B cell (primary cell): ENCODE measurements at regions of chr2 and their contacts with region 1.

Region 1: GRCh38 chr2:25165992-25166875 is 2.1 kb downstream of the POMC start:
- DNase-seq: peak; percentile 90
- ATAC-seq: peak; percentile 95
- H3K4me3 ChIP-seq: no peak overlapping the region
- H3K4me3 Mint-ChIP-seq: peak overlapping the region; percentile 76
- H3K27ac ChIP-seq: peak overlapping the region; percentile 34 to 46
- H3K27ac Mint-ChIP-seq: no peak overlapping the region
- H3K4me1 ChIP-seq: peaks cover 36 to 40% of the 10 kb centered on the region in 2 donors
- H3K4me1 Mint-ChIP-seq: peaks cover 41% of the 10 kb centered on the region
- H3K27me3 ChIP-seq: peaks cover 0 to 34% (median 21%) of the 10 kb centered on the region in 4 experiments
- H3K27me3 Mint-ChIP-seq: peaks cover 36% of the 10 kb centered on the region
- CTCF ChIP-seq: peak; percentile 67

Region 2: GRCh38 chr2:25030702-25031101 is 135.5 kb before region 1 on chr2:
- CTCF ChIA-PET with region 1: no interaction called
- POLR2A ChIA-PET with region 1: no interaction called
- intact Hi-C with region 1: no loop called
- DNase-seq: no peak
- ATAC-seq: no peak
- H3K4me3 ChIP-seq: no peak overlapping the region
- H3K4me3 Mint-ChIP-seq: no peak overlapping the region
- H3K27ac ChIP-seq: no peak overlapping the region
- H3K27ac Mint-ChIP-seq: no peak overlapping the region
- H3K4me1 ChIP-seq: peaks cover 0 to 3% of the 10 kb centered on the region in 2 donors
- H3K4me1 Mint-ChIP-seq: peaks cover 6% of the 10 kb centered on the region
- H3K27me3 ChIP-seq: no peaks in the 10 kb centered on the region
- H3K27me3 Mint-ChIP-seq: peaks cover 5% of the 10 kb centered on the region
- CTCF ChIP-seq: no peak

Region 3: DNA sequence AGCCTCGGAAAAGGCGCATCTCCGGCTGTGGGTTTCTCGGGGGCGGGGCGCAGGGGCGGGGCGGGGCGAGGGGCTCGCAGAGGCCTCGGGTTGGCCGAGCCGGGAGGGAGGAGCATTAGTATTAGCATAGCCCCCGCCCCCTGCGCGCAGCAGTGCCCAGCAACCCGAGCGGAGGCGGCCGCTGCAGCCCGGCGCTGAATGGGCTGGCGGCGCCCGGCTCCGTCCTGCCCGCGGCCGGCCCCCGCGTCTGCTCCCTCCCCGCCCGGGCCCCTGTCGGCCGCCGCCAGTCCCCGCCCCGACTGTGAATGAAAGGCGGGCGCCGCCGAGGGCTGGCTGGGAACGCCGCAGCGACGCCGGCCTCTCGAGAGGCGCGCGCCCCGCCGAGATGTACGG is 124.3 kb before region 1 on chr2 and contains the start of gene EFR3B:
- CTCF ChIA-PET with region 1: no interaction called
- POLR2A ChIA-PET with region 1: no interaction called
- intact Hi-C with region 1: loop called (anchors 10 kb)
- DNase-seq: peak; percentile 92
- ATAC-seq: peak; percentile 98
- H3K4me3 ChIP-seq: peak within 1 kb of the TSS; percentile 13 to 76 (median 52)
- H3K4me3 Mint-ChIP-seq: peak within 1 kb of the TSS; percentile 91
- H3K27ac ChIP-seq: no peak within 1 kb of the TSS
- H3K27ac Mint-ChIP-seq: no peak within 1 kb of the TSS
- H3K4me1 ChIP-seq: peaks cover 23 to 30% of the 10 kb centered on the region in 2 donors
- H3K4me1 Mint-ChIP-seq: peaks cover 28% of the 10 kb centered on the region
- H3K27me3 ChIP-seq: peaks cover 0 to 44% (median 24%) of the 10 kb centered on the region in 4 experiments
- H3K27me3 Mint-ChIP-seq: peaks cover 47% of the 10 kb centered on the region
- CTCF ChIP-seq: no peak
- total RNA-seq, gene EFR3B: 0.12 and 0.15 TPM in 2 replicates

Region 4: DNA sequence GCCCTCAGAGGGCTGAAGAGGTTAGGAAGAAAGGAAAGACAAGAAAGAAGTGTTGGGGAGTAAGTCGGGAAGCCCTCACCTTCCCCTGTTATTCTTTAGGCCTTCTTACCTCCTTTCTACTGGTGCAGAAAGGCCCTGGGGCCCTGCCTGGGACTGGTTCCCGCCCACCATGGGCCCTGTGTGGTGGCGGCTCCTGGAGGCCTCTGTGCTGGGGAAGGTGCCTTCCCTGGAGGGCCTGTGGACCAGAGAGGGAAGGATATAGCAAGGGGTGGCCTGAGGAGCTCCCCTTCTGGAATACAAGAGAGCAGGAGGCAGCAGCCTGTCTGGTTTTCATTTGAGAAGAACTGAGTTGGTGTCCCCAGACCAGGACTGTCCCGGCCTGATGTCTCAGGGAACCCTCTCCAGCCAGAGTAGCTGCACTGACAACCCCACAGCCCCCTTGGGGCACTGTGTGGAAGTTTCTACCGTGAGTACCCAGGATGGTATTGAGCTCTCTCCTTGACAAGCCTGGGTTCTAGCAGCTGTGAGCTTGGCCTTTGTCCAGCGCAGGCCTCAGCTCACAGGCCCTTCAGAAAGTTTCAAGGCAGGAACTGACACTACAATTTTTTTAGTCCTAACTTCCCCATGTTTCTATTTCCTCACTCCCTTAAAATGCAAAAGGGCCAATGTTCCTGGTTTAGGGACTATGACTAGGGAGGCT is 77.3 kb before region 1 on chr2:
- CTCF ChIA-PET with region 1: no interaction called
- POLR2A ChIA-PET with region 1: no interaction called
- intact Hi-C with region 1: no loop called
- DNase-seq: no peak
- ATAC-seq: no peak
- H3K4me3 ChIP-seq: no peak overlapping the region
- H3K4me3 Mint-ChIP-seq: no peak overlapping the region
- H3K27ac ChIP-seq: no peak overlapping the region
- H3K27ac Mint-ChIP-seq: no peak overlapping the region
- H3K4me1 ChIP-seq: no peaks in the 10 kb centered on the region
- H3K4me1 Mint-ChIP-seq: no peaks in the 10 kb centered on the region
- H3K27me3 ChIP-seq: no peaks in the 10 kb centered on the region
- H3K27me3 Mint-ChIP-seq: peaks cover 10% of the 10 kb centered on the region
- CTCF ChIP-seq: no peak

Region 5: DNA sequence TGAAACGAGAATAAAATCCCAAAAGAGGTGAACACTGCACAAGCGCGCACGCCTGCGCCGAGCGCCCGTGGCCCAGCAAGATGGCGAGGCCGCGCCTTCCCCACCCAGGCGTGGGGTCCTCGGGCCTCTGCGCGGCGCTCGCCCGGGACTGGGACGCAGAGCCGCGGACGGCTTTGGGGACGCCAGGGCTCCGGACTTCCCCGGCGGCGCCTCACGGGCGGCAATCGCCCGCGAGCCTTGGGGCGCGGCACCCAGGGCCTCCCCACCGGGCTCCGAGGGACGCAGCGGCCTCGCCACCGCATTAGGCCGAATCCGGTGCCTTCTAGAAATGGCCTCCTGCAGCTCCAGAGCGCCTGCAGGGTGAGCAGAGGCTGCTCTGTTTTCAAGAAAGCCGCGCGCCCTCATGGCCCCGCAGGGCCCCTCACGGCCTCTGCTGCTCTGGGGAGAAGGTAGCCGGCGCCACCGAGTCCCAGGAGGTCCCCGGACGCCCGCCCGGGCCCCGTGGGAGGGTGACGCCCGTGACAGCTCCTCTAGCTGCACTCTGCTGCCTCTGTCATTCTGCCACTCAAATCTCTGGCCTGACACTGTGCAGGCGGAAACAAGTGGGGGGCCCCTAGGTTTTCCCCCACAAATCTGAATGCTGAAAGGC is 38.1 kb after region 1 on chr2:
- CTCF ChIA-PET with region 1: interaction called, 11 read pairs
- POLR2A ChIA-PET with region 1: no interaction called
- intact Hi-C with region 1: no loop called
- DNase-seq: peak; percentile 76
- ATAC-seq: peak; percentile 89
- H3K4me3 ChIP-seq: peak overlapping the region in 4 of 5 experiments; percentile 28 to 55 (median 43)
- H3K4me3 Mint-ChIP-seq: peak overlapping the region; percentile 34
- H3K27ac ChIP-seq: peak overlapping the region in 1 of 2 donors; percentile 16
- H3K27ac Mint-ChIP-seq: no peak overlapping the region
- H3K4me1 ChIP-seq: peaks cover 44 to 53% of the 10 kb centered on the region in 2 donors
- H3K4me1 Mint-ChIP-seq: peaks cover 45% of the 10 kb centered on the region
- H3K27me3 ChIP-seq: no peaks in the 10 kb centered on the region
- H3K27me3 Mint-ChIP-seq: no peaks in the 10 kb centered on the region
- CTCF ChIP-seq: peak; percentile 11

Region 6: DNA sequence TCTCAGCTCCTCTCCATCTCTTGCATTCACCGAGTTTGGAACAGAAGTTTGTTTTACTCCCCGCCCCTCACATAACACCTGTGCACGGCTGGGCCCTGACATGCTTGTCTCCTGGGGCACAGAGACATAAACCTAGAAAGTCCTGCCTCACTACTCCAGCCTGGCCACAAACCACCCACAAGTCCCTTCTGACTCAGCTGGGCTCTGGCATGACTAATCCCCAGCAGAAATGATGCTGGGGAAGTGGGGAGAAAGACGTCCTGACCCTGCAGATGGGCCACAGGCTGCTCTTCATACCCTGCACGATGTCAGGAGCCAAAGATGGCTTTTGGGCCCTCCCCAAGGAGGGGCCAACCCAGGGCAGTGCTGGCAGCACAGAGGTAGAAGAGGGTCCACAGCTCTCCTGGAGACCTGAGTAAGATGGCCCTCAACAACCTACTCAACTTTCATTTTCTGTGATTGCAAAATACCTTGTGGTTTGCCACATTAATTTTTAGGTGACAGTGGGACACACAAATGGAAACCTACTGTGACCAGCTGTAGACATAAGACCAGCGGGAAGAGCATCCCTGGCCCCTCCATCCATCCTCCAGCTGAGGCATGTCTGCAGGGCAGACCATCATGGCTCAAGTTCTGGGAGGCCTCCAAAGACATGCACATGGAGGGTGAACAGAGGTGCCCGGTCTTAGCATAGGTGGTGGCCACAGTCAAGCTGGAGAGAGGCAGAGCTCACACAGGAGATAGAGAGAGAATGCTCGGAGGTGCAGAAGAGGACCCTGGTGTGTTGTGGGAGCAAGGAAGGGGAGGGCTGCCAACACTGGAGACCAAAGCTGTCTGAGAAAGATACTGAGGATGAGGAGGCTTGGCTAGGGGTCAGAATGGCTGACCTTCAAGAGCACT is 135.5 kb after region 1 on chr2:
- CTCF ChIA-PET with region 1: no interaction called
- POLR2A ChIA-PET with region 1: no interaction called
- intact Hi-C with region 1: loop called (anchors 5 kb)
- DNase-seq: peak; percentile 66
- ATAC-seq: peak; percentile 92
- H3K4me3 ChIP-seq: no peak overlapping the region
- H3K4me3 Mint-ChIP-seq: peak overlapping the region; percentile 58
- H3K27ac ChIP-seq: no peak overlapping the region
- H3K27ac Mint-ChIP-seq: peak overlapping the region; percentile 23
- H3K4me1 ChIP-seq: peaks cover 28 to 34% of the 10 kb centered on the region in 2 donors
- H3K4me1 Mint-ChIP-seq: peaks cover 33% of the 10 kb centered on the region
- H3K27me3 ChIP-seq: no peaks in the 10 kb centered on the region
- H3K27me3 Mint-ChIP-seq: no peaks in the 10 kb centered on the region
- CTCF ChIP-seq: no peak

Region 7: GRCh38 chr2:25323042-25323514 is 156.8 kb after region 1 on chr2:
- CTCF ChIA-PET with region 1: no interaction called
- POLR2A ChIA-PET with region 1: no interaction called
- intact Hi-C with region 1: no loop called
- DNase-seq: no peak
- ATAC-seq: no peak
- H3K4me3 ChIP-seq: no peak overlapping the region
- H3K4me3 Mint-ChIP-seq: no peak overlapping the region
- H3K27ac ChIP-seq: no peak overlapping the region
- H3K27ac Mint-ChIP-seq: no peak overlapping the region
- H3K4me1 ChIP-seq: peaks cover 5 to 7% of the 10 kb centered on the region in 2 donors
- H3K4me1 Mint-ChIP-seq: peaks cover 16% of the 10 kb centered on the region
- H3K27me3 ChIP-seq: peaks cover 0 to 17% (median 3%) of the 10 kb centered on the region in 4 experiments
- H3K27me3 Mint-ChIP-seq: no peaks in the 10 kb centered on the region
- CTCF ChIP-seq: no peak

Region 8: DNA sequence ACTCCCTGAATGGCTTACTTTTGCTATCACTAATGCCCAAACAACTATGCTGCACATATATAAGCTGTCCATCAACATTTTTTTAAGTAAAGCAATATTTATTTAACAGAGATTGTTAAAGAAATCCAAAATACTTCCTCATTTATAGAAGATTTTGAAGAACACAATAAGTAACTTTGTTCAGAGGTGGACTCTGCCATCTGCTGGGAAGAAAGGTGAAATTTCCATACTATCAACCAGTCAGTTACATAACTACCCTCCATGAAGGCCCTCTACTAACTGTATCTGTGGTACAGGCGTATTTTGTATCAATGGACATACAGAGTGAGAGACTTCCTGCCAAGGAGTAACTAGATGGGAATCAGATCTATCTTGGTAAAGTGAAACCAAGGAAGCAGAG is 401.2 kb after region 1 on chr2:
- CTCF ChIA-PET with region 1: interaction called, 36 read pairs
- POLR2A ChIA-PET with region 1: no interaction called
- intact Hi-C with region 1: loop called (anchors 1 kb)
- DNase-seq: peak; percentile 71
- ATAC-seq: peak; percentile 69
- H3K4me3 ChIP-seq: no peak overlapping the region
- H3K4me3 Mint-ChIP-seq: no peak overlapping the region
- H3K27ac ChIP-seq: peak overlapping the region in 1 of 2 donors; percentile 2
- H3K27ac Mint-ChIP-seq: no peak overlapping the region
- H3K4me1 ChIP-seq: peaks cover 17 to 19% of the 10 kb centered on the region in 2 donors
- H3K4me1 Mint-ChIP-seq: peaks cover 28% of the 10 kb centered on the region
- H3K27me3 ChIP-seq: no peaks in the 10 kb centered on the region
- H3K27me3 Mint-ChIP-seq: no peaks in the 10 kb centered on the region
- CTCF ChIP-seq: peak; percentile 77